Activated CD4-positive, alpha-beta memory T cell treated with anti-CD3 and anti-CD28 coated beads, Interleukin-2, amount 10 ng/mL, durations not matched to agents 7 days and 5 days (primary cell): ENCODE measurements at regions of chr9 and their contacts with region 1.

Region 1: GRCh38 chr9:122464633-122465567 is 12.8 kb downstream of the OR1J1 start:
- DNase-seq: peak; percentile 71
- H3K4me3 Mint-ChIP-seq: peak overlapping the region; percentile 81
- H3K27ac Mint-ChIP-seq: peak overlapping the region; percentile 73
- H3K4me1 Mint-ChIP-seq: peaks cover 16% of the 10 kb centered on the region
- H3K27me3 Mint-ChIP-seq: peaks cover 42% of the 10 kb centered on the region

Region 2: DNA sequence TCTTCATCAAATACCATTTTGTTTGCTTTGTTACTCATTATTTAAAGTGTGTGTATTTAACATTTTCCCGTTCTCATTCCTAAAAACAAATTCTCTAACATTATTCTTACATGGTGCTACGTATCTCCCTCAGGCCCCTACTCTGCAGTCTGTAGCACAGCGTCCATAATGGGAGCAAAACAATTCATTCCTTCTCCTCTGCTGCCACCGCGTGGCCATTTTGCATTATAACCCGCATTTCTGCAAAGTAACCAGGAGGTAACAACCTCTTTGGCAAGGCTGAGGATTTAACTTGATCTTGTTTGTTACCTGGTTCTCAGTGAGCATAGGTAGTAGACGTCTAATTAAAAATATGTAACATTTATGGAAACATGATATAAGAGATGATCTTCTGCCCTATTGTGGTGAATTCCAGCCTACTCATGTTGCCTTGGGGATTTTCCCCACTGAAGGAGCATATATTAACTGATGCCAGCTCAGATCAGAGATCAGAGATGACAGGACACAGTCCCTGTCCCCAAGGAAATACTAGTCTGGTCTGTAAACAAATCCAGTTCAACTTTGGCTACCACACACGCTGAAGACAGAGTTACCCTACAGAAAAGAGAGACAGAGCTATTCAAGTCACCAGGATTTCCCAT is 345.5 kb after region 1 on chr9:
- CTCF ChIA-PET with region 1: interaction called, 32 read pairs
- POLR2A ChIA-PET with region 1: interaction called, 4 read pairs
- DNase-seq: peak; percentile 79
- H3K4me3 Mint-ChIP-seq: no peak overlapping the region
- H3K27ac Mint-ChIP-seq: no peak overlapping the region
- H3K4me1 Mint-ChIP-seq: peaks cover 28% of the 10 kb centered on the region
- H3K27me3 Mint-ChIP-seq: no peaks in the 10 kb centered on the region

Region 3: GRCh38 chr9:122816163-122816867 is 351.4 kb after region 1 on chr9:
- CTCF ChIA-PET with region 1: interaction called, 12 read pairs
- POLR2A ChIA-PET with region 1: no interaction called
- DNase-seq: peak; percentile 60
- H3K4me3 Mint-ChIP-seq: peak overlapping the region; percentile 63
- H3K27ac Mint-ChIP-seq: peak overlapping the region; percentile 87
- H3K4me1 Mint-ChIP-seq: peaks cover 33% of the 10 kb centered on the region
- H3K27me3 Mint-ChIP-seq: no peaks in the 10 kb centered on the region